B cell (primary cell): ENCODE measurements at regions of chr6 and their contacts with region 1.

Region 1: GRCh38 chr6:41895300-41896233 is at the start of gene USP49:
- DNase-seq: peak; percentile 93
- ATAC-seq: peak; percentile 92
- H3K4me3 ChIP-seq: peak within 1 kb of the TSS; percentile 65 to 96 (median 85)
- H3K4me3 Mint-ChIP-seq: no peak within 1 kb of the TSS
- H3K27ac ChIP-seq: peak within 1 kb of the TSS; percentile 71 to 92
- H3K27ac Mint-ChIP-seq: peak within 1 kb of the TSS; percentile 89
- H3K4me1 ChIP-seq: peaks cover 15 to 17% of the 10 kb centered on the region in 2 donors
- H3K4me1 Mint-ChIP-seq: peaks cover 10% of the 10 kb centered on the region
- H3K27me3 ChIP-seq: no peaks in the 10 kb centered on the region
- H3K27me3 Mint-ChIP-seq: no peaks in the 10 kb centered on the region
- CTCF ChIP-seq: no peak
- total RNA-seq, gene USP49: 7.5 and 9.9 TPM in 2 replicates

Region 2: DNA sequence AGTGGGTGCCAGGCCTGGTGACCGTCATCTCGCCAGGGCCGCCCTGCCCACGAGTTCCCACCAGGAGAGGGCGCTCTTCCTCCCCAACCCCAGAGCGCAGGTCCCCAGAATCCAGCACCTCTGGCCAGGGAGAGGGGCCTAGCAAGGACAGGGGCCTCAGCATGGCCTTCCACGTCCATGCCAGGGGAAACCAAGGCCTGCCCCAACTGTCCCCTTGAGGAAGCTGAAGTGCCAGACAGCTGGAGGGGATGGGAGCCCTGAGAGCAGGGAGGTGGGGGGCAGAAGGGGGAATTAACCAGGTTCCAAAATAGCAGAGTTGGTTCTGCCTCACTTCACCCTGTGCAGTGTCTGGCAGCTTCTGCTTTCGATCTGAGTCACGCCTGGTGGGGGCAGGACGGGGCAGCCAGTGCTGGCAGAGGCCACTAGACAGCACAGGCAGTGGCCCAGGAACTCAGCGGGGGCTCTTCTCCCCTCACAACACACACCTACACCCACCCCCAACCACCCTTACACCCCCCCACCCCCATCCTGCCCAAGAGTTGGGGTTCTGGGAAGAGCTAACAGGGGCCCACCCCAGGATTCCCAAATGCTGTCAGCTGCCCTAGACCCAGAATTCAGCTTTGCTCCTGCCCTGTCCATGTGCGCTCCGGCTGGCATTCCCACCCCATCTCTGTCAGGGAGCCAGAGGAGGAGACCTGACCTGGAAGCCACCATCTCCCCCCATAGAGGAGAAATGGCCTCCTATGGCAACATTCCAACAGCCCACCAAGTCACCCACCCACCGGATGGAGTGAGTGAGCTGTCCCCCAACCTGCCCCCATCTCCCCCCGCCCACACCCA is 189.4 kb before region 1 on chr6:
- CTCF ChIA-PET with region 1: no interaction called
- POLR2A ChIA-PET with region 1: no interaction called
- intact Hi-C with region 1: loop called (anchors 10 kb)
- DNase-seq: peak; percentile 94
- ATAC-seq: peak; percentile 81
- H3K4me3 ChIP-seq: peak overlapping the region in 4 of 5 experiments; percentile 33 to 65 (median 56)
- H3K4me3 Mint-ChIP-seq: peak overlapping the region; percentile 86
- H3K27ac ChIP-seq: peak overlapping the region; percentile 83 to 96
- H3K27ac Mint-ChIP-seq: peak overlapping the region; percentile 100
- H3K4me1 ChIP-seq: peaks cover 84 to 87% of the 10 kb centered on the region in 2 donors
- H3K4me1 Mint-ChIP-seq: peaks cover 97% of the 10 kb centered on the region
- H3K27me3 ChIP-seq: no peaks in the 10 kb centered on the region
- H3K27me3 Mint-ChIP-seq: no peaks in the 10 kb centered on the region
- CTCF ChIP-seq: peak; percentile 89

Region 3: DNA sequence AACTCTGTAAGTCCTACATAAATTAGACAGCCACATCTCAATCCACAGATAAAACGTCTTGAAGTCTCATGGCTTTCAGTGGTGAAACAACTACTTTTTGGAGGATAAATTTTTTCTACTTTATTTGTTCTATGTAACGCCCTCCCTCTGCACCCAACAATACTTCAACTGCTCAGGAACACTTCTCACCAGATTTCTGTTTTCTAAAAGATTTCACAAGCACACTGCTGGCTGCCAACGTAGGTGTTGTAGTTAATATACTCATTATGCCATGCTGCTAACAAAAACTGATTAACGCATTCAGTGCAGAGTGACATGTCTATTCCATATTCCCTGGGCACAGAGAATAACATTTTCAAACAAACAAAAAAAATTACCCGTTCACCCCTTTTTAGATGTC is 10.6 kb before region 1 on chr6:
- CTCF ChIA-PET with region 1: no interaction called
- POLR2A ChIA-PET with region 1: no interaction called
- intact Hi-C with region 1: no loop called
- DNase-seq: no peak
- ATAC-seq: no peak
- H3K4me3 ChIP-seq: no peak overlapping the region
- H3K4me3 Mint-ChIP-seq: no peak overlapping the region
- H3K27ac ChIP-seq: no peak overlapping the region
- H3K27ac Mint-ChIP-seq: no peak overlapping the region
- H3K4me1 ChIP-seq: no peaks in the 10 kb centered on the region
- H3K4me1 Mint-ChIP-seq: no peaks in the 10 kb centered on the region
- H3K27me3 ChIP-seq: no peaks in the 10 kb centered on the region
- H3K27me3 Mint-ChIP-seq: no peaks in the 10 kb centered on the region
- CTCF ChIP-seq: no peak

Region 4: DNA sequence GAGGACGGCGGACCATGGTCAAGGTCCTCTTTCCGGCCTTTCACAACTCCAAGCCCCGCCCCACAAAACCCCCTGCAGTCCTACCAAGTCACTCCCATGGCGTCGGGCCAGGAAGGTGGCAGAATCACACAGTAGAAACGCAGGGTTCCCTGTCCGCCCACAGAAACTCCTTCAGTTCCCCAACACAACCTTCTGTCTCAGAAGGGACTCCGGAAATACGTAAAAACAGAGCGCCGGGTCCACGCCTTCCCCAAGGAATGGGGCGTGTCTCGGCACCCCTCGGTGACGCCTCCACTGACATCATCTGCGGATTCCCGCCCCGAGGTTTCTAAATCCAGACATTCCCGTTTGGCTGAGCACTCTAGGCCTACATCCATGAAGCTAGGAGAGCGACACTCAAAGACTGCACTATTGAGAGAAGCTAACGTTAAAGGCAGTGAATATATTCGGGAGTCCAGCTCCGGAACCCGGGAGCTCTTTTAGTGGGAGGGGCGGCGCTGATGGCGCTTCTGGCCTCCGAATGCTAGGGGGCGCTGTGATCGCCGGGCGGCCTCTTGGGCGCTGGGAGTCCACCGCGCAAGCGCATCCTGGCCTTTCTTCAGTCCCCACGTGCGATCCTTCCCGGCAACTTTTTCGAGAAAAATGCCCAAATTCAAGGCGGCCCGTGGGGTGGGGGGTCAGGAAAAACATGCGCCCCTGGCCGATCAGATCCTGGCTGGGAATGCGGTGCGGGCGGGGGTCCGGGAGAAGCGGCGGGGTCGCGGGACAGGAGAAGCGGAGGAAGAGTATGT is 25.5 kb after region 1 on chr6 and contains the starts of genes BYSL and MED20:
- CTCF ChIA-PET with region 1: interaction called, 15 read pairs
- POLR2A ChIA-PET with region 1: interaction called, 6 read pairs
- intact Hi-C with region 1: loop called (anchors 1 kb)
- DNase-seq: peak; percentile 98
- ATAC-seq: peak; percentile 93
- H3K4me3 ChIP-seq: peak within 1 kb of the TSS; percentile 67 to 99 (median 97)
- H3K4me3 Mint-ChIP-seq: peak within 1 kb of the TSS; percentile 98
- H3K27ac ChIP-seq: peak within 1 kb of the TSS; percentile 91 to 96
- H3K27ac Mint-ChIP-seq: peak within 1 kb of the TSS; percentile 98
- H3K4me1 ChIP-seq: peaks cover 26 to 29% of the 10 kb centered on the region in 2 donors
- H3K4me1 Mint-ChIP-seq: peaks cover 47% of the 10 kb centered on the region
- H3K27me3 ChIP-seq: no peaks in the 10 kb centered on the region
- H3K27me3 Mint-ChIP-seq: no peaks in the 10 kb centered on the region
- CTCF ChIP-seq: peak; percentile 93
- total RNA-seq, gene BYSL: 10.5 and 11.1 TPM in 2 replicates
- total RNA-seq, gene MED20: 18.2 and 24.2 TPM in 2 replicates

Region 5: GRCh38 chr6:41941280-41942066 is 45.9 kb after region 1 on chr6 and contains the start of gene CCND3:
- CTCF ChIA-PET with region 1: no interaction called
- POLR2A ChIA-PET with region 1: interaction called, 8 read pairs
- intact Hi-C with region 1: loop called (anchors 1 kb)
- DNase-seq: peak; percentile 87
- ATAC-seq: peak; percentile 94
- H3K4me3 ChIP-seq: peak within 1 kb of the TSS; percentile 61 to 77 (median 71)
- H3K4me3 Mint-ChIP-seq: peak within 1 kb of the TSS; percentile 85
- H3K27ac ChIP-seq: peak within 1 kb of the TSS; percentile 10 to 68
- H3K27ac Mint-ChIP-seq: peak within 1 kb of the TSS; percentile 87
- H3K4me1 ChIP-seq: peaks cover 51 to 58% of the 10 kb centered on the region in 2 donors
- H3K4me1 Mint-ChIP-seq: peaks cover 52% of the 10 kb centered on the region
- H3K27me3 ChIP-seq: no peaks in the 10 kb centered on the region
- H3K27me3 Mint-ChIP-seq: no peaks in the 10 kb centered on the region
- CTCF ChIP-seq: no peak
- total RNA-seq, gene CCND3: 136 and 145 TPM in 2 replicates

Region 6: GRCh38 chr6:42043787-42044475 is 148.4 kb after region 1 on chr6:
- CTCF ChIA-PET with region 1: interaction called, 16 read pairs
- POLR2A ChIA-PET with region 1: interaction called, 8 read pairs
- intact Hi-C with region 1: loop called (anchors 1 kb)
- DNase-seq: peak; percentile 87
- ATAC-seq: peak; percentile 32
- H3K4me3 ChIP-seq: peak overlapping the region in 1 of 5 experiments; percentile 23
- H3K4me3 Mint-ChIP-seq: peak overlapping the region; percentile 69
- H3K27ac ChIP-seq: peak overlapping the region; percentile 26 to 56
- H3K27ac Mint-ChIP-seq: peak overlapping the region; percentile 88
- H3K4me1 ChIP-seq: peaks cover 67 to 80% of the 10 kb centered on the region in 2 donors
- H3K4me1 Mint-ChIP-seq: peaks cover 82% of the 10 kb centered on the region
- H3K27me3 ChIP-seq: no peaks in the 10 kb centered on the region
- H3K27me3 Mint-ChIP-seq: no peaks in the 10 kb centered on the region
- CTCF ChIP-seq: peak; percentile 89

Region 7: DNA sequence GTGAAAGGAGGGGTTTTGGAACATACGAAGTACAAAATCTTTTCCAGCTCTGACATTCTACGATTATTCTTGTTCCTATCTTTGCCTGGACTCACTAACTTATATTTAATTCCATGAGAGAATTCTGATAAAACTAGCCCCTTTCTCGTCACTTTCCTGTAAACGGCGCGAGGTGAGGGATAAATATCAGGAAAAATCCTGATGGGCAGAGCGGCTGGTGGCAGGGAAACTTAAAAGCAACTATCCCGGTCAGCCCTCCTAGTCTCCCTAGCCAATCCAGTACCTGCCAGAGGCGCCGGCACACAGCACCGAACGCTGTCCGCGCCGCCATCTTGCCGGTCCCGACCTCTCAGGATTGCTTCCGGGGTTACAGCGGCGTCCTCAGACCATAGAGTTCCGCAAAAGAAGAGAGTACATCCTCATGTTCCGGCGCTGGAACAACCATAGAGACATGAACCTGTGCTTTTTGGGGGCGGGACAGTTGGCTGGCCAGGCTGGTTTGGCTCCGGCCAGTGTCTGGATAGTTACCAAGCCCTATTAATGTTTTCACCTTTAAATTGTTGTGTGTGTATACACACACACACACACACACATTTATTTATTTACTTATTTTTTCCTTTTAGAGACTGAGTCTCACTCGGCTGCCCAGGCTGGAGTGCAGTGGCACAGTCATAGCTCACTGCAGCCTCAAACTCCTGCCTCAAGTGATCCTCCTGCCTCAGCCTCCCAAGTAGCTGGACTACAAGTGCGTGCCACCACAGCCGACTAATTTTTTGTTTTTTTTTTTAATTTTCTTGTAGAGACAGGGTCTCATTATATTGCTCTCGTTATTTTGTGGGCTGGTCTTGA is 322.2 kb after region 1 on chr6 and contains the start of gene MRPS10:
- CTCF ChIA-PET with region 1: no interaction called
- POLR2A ChIA-PET with region 1: no interaction called
- intact Hi-C with region 1: loop called (anchors 5 kb)
- DNase-seq: peak; percentile 92
- ATAC-seq: peak; percentile 99
- H3K4me3 ChIP-seq: peak within 1 kb of the TSS; percentile 76 to 98 (median 86)
- H3K4me3 Mint-ChIP-seq: peak within 1 kb of the TSS; percentile 99
- H3K27ac ChIP-seq: peak within 1 kb of the TSS; percentile 58 to 76
- H3K27ac Mint-ChIP-seq: peak within 1 kb of the TSS; percentile 98
- H3K4me1 ChIP-seq: peaks cover 7 to 14% of the 10 kb centered on the region in 2 donors
- H3K4me1 Mint-ChIP-seq: peaks cover 23% of the 10 kb centered on the region
- H3K27me3 ChIP-seq: no peaks in the 10 kb centered on the region
- H3K27me3 Mint-ChIP-seq: peaks cover 4% of the 10 kb centered on the region
- CTCF ChIP-seq: no peak
- total RNA-seq, gene MRPS10: 26.4 and 28.6 TPM in 2 replicates